Activated T-helper 1 cell treated with anti-CD3 and anti-CD28 coated beads, Interleukin-12 subunit alpha, Interleukin-12 subunit beta, Interleukin-2, Interleukin-4 antibody, amounts not matched to agents 30 ng/mL and 10 ng/mL and 1 ng/mL, durations not matched to agents 14 hours and 24 hours and 36 hours (primary cell): ENCODE measurements at regions of chr6 and their contacts with region 1.

Region 1: GRCh38 chr6:33391278-33391921 is at the start of gene KIFC1:
- DNase-seq: peak; percentile 99
- H3K4me3 Mint-ChIP-seq: peak within 1 kb of the TSS; percentile 84
- H3K27ac Mint-ChIP-seq: peak within 1 kb of the TSS; percentile 94
- H3K4me1 Mint-ChIP-seq: peaks cover 47% of the 10 kb centered on the region
- H3K27me3 Mint-ChIP-seq: peaks cover 2% of the 10 kb centered on the region
- total RNA-seq, gene KIFC1: 54.7 and 59.6 TPM in 2 replicates

Region 2: DNA sequence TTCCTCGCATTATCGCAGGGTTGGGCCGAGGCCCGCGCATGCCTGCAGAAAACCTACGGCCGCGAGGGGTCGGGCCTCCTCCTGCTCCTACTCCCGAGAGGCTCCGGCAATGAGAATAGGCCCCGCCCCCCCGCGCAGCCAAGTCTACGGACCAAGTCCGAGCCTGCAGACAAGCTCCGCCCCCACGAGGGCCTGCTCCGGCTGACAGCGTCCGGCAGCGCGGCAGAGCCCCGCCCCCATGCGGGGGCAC is 1195.8 kb before region 1 on chr6:
- intact Hi-C with region 1: loop called (anchors 5 kb)
- DNase-seq: peak; percentile 100
- H3K4me3 Mint-ChIP-seq: peak overlapping the region; percentile 97
- H3K27ac Mint-ChIP-seq: peak overlapping the region; percentile 98
- H3K4me1 Mint-ChIP-seq: peaks cover 48% of the 10 kb centered on the region
- H3K27me3 Mint-ChIP-seq: peaks cover 2% of the 10 kb centered on the region

Region 3: DNA sequence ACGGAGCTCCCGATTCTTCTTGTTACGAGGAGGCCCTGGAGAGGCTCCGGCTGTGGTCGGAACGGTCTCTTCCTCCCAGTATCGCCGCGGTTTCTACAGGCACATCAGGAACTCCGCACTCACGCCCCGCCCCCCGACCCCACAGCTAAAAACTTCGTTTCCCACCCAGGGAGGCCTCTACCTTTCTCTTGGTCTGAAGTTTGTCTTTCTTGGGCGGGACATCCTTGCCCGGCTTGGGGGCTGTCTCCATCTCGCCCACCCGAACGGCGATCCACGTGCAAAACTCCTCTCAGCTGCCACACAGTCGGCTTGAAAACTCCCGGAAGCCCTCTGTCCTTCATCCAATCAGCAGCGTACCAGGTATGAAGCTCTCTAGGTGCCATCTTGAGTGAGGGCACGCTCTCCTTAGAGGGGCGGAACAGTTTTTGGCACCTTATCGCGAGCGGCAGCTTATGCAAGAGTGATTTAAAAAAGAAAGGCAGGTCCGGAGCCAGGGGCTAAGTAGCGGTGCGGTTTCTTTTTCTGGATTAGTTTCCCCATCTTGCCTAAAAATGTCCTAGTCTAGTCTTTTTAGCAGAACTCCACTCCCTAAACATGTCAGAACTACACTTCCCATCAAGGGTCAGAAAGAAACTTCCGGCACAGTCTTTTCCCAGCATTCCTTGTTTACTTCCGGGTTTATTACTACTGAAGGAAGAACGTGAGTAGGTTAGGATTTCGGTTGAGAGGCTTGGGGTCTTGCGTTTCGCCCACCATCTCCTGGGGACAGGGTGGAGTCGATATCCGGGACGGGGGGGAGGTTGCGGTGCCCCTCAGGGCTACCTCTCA is 102.3 kb before region 1 on chr6 and contains the starts of genes PFDN6 and WDR46:
- intact Hi-C with region 1: loop called (anchors 2 kb)
- DNase-seq: peak; percentile 83
- H3K4me3 Mint-ChIP-seq: peak within 1 kb of the TSS; percentile 98
- H3K27ac Mint-ChIP-seq: peak within 1 kb of the TSS; percentile 86
- H3K4me1 Mint-ChIP-seq: peaks cover 31% of the 10 kb centered on the region
- H3K27me3 Mint-ChIP-seq: no peaks in the 10 kb centered on the region
- total RNA-seq, gene PFDN6: 122 and 126 TPM in 2 replicates
- total RNA-seq, gene WDR46: 113 and 123 TPM in 2 replicates

Region 4: DNA sequence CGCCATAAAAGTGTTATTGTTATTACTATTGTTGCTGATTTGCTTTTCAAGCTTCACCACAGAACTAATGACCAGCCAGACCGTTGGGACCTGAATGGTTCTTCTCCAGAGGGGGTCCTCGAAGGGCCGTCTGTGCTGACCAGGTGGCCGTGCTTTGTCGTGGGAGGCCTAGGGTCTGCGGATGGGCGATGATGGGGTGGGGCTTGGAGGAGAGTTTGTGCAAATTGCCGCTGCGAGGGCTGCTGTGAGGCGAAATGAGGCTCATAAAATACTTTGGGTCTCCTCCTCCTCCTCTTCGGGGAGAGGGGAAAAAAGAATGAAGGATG is 67.8 kb before region 1 on chr6:
- intact Hi-C with region 1: loop called (anchors 1 kb)
- DNase-seq: no peak
- H3K4me3 Mint-ChIP-seq: peak overlapping the region; percentile 97
- H3K27ac Mint-ChIP-seq: peak overlapping the region; percentile 98
- H3K4me1 Mint-ChIP-seq: peaks cover 55% of the 10 kb centered on the region
- H3K27me3 Mint-ChIP-seq: no peaks in the 10 kb centered on the region

Region 5: GRCh38 chr6:33417903-33418689 is 26.7 kb after region 1 on chr6 and contains the start of gene CUTA:
- intact Hi-C with region 1: loop called (anchors 1 kb)
- DNase-seq: peak; percentile 98
- H3K4me3 Mint-ChIP-seq: peak within 1 kb of the TSS; percentile 95
- H3K27ac Mint-ChIP-seq: peak within 1 kb of the TSS; percentile 96
- H3K4me1 Mint-ChIP-seq: peaks cover 70% of the 10 kb centered on the region
- H3K27me3 Mint-ChIP-seq: no peaks in the 10 kb centered on the region
- total RNA-seq, gene CUTA: 131 and 137 TPM in 2 replicates

Region 6: DNA sequence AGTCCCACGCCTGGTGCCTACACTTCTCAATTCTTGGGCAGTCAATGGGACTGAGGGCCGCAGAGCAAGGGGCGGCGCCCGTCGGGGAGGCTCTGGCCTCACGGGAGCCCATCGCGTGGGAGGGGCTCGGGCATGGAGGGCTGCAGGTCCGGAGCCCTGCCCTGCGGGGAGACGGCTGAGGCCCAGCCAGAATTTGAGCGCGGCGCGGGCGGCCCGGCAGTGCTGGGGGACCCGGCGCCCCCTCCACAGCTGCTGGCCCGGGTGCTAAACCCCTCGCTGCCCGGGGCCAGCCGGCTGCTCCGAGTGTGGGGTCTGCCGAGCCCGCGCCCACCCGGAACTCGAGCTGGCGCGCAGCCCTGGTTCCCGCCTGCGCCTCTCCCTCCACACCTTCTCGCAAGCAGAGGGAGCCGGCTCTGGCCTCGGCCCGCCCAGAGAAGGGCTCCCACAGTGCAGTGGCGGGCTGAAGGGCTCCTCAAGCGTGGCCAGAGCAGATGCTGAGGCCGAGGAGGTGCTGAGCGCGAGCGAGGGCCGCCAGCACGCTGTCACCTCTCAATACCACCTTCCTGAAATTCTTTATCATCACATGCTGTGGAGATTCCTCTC is 130.2 kb after region 1 on chr6:
- intact Hi-C with region 1: no loop called
- DNase-seq: no peak
- H3K4me3 Mint-ChIP-seq: no peak overlapping the region
- H3K27ac Mint-ChIP-seq: no peak overlapping the region
- H3K4me1 Mint-ChIP-seq: no peaks in the 10 kb centered on the region
- H3K27me3 Mint-ChIP-seq: peaks cover 6% of the 10 kb centered on the region

Region 7: DNA sequence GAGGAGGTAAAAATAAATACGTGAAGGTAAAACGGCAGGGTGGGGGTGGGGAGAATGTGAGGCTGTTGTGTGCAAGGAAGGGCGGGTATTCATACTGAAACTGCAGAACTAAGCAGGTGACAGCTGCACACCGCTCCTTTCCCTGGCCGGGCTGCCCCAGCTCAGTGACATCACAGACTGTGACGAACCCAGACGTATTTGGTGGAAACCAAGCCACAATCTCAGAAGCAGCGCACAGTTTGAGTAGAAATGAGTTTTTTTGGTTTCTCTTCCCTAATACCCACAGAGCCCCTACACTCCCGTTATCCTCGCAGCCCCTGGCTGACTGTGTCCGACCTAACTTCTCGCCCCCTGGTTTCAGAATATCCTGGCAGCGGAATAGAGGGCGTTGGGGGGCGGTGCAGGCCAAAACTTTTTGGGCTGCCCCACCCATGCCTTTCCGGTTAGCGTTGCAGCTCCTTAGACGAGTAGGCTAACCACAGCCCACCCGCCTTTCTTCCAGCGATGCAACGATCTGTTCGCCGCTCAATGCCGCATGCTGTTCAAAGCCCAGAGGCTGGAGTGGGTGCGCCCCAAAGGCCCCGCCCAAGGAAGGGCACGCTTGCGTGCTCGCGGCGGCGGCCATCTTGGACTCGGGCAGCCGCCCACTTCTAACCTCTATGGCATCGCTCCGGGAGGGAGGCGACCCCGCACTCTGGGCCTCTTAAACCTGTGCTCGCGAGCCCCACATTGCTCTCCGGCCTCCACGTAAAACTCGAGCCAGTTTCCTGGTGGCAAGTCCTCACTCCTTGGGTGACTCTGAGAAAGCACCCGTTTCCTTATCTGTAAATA is 179.6 kb after region 1 on chr6:
- intact Hi-C with region 1: loop called (anchors 1 kb)
- DNase-seq: peak; percentile 91
- H3K4me3 Mint-ChIP-seq: peak overlapping the region; percentile 83
- H3K27ac Mint-ChIP-seq: peak overlapping the region; percentile 99
- H3K4me1 Mint-ChIP-seq: peaks cover 62% of the 10 kb centered on the region
- H3K27me3 Mint-ChIP-seq: no peaks in the 10 kb centered on the region

Region 8: GRCh38 chr6:33620856-33621710 is 229.7 kb after region 1 on chr6 and contains the start of gene ITPR3:
- intact Hi-C with region 1: loop called (anchors 5 kb)
- DNase-seq: peak; percentile 68
- H3K4me3 Mint-ChIP-seq: peak within 1 kb of the TSS; percentile 96
- H3K27ac Mint-ChIP-seq: peak within 1 kb of the TSS; percentile 90
- H3K4me1 Mint-ChIP-seq: peaks cover 49% of the 10 kb centered on the region
- H3K27me3 Mint-ChIP-seq: no peaks in the 10 kb centered on the region
- total RNA-seq, gene ITPR3: 42.7 and 42.9 TPM in 2 replicates